Activated CD4-positive, alpha-beta memory T cell treated with anti-CD3 and anti-CD28 coated beads for 36 hours (primary cell): ENCODE measurements at regions of chr21 and their contacts with region 1.

Region 1: DNA sequence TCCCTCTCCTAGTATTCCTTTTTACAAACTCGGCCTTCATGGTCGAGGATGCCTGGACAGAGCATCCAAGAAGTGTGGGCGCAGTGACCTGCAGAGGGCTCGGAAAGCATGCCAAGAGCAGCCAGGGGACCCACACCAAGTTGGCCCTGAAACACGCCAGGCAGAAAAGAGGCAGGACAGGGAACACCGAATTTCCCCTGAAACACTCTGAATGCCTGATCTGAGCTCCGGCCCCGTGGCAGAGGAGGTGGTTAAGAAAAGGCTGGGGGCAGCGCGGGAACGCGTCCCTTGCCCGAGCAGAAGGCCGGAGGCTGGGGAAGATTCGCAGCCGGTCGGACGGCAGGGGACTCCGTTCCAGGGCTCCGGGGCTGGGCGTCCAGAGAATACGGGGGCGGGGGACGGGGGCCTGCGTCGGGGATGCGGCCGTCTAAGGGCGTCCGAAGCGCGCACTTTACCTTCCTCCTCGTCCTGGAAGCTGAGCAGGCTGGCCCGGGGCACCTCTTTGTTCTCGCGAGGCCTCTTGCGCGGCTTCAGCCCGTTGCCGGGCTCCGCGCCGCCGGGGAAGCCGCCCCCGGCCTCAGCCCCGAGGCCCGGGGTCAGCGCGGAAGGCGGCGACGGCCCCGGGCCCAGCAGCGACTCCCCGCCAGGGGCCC is 558 bp downstream of the PAXBP1 start:
- DNase-seq: peak; percentile 69
- H3K4me3 Mint-ChIP-seq: peak overlapping the region; percentile 98
- H3K27ac Mint-ChIP-seq: peak overlapping the region; percentile 93
- H3K4me1 Mint-ChIP-seq: peaks cover 61% of the 10 kb centered on the region
- H3K27me3 Mint-ChIP-seq: peaks cover 3% of the 10 kb centered on the region

Region 2: GRCh38 chr21:32507342-32507919 is 263.6 kb before region 1 on chr21:
- CTCF ChIA-PET with region 1: no interaction called
- POLR2A ChIA-PET with region 1: no interaction called
- intact Hi-C with region 1: no loop called
- DNase-seq: no peak
- H3K4me3 Mint-ChIP-seq: no peak overlapping the region
- H3K27ac Mint-ChIP-seq: no peak overlapping the region
- H3K4me1 Mint-ChIP-seq: no peaks in the 10 kb centered on the region
- H3K27me3 Mint-ChIP-seq: no peaks in the 10 kb centered on the region

Region 3: DNA sequence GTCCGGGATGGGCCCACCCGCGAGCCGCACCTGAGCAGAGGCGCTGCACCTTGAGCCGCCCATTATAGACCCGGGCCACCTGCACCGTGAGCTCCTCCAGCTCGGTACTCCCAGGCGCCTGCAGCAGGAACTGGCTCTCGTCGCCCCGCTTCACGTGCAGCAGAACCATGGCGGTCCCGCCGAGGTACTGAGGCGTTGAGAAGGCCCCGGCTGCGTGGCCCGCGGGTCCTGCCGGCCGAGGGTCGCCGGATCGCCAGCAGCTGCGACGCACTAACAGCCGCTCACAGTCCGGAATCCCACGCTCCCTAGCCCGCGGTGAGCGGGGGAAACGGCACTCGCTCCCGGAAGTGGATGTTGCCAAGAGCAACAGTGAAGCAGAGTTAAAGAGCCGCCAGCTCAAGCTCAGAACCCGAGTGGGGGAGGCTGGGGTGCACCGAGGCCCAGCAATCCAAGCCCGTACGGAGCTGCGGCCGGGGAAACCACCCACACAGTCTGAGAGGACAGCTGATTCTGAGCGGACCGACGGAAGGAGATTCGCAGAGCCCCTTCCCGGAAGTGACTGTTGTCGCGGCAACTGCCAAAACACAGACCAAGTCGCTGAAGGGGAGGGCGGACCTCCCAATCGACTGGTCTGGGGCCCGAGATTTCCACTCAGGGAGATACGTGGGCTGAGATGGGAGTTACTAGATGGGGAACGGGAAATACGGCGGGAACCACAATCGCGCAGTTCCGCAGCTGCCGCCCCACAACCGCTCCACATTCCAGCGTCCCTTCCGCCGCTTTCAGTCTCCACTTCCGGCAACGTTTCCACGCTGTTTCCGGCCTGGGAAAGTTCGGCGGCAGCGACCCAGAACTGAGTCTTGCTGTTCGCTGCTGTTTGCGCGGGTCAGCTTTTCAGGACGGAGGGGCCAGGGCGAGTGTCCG is 158.7 kb before region 1 on chr21 and contains the start of gene CFAP298:
- CTCF ChIA-PET with region 1: interaction called, 3 read pairs
- POLR2A ChIA-PET with region 1: interaction called, 8 read pairs
- intact Hi-C with region 1: loop called (anchors 1 kb)
- DNase-seq: peak; percentile 93
- H3K4me3 Mint-ChIP-seq: peak within 1 kb of the TSS; percentile 86
- H3K27ac Mint-ChIP-seq: peak within 1 kb of the TSS; percentile 79
- H3K4me1 Mint-ChIP-seq: peaks cover 10% of the 10 kb centered on the region
- H3K27me3 Mint-ChIP-seq: no peaks in the 10 kb centered on the region
- total RNA-seq, gene CFAP298: 39.4 to 41.8 TPM

Region 4: GRCh38 chr21:32807717-32808380 is 36.9 kb after region 1 on chr21:
- CTCF ChIA-PET with region 1: no interaction called
- POLR2A ChIA-PET with region 1: no interaction called
- intact Hi-C with region 1: loop called (anchors 2 kb)
- DNase-seq: no peak
- H3K4me3 Mint-ChIP-seq: no peak overlapping the region
- H3K27ac Mint-ChIP-seq: no peak overlapping the region
- H3K4me1 Mint-ChIP-seq: peaks cover 20% of the 10 kb centered on the region
- H3K27me3 Mint-ChIP-seq: no peaks in the 10 kb centered on the region

Region 5: DNA sequence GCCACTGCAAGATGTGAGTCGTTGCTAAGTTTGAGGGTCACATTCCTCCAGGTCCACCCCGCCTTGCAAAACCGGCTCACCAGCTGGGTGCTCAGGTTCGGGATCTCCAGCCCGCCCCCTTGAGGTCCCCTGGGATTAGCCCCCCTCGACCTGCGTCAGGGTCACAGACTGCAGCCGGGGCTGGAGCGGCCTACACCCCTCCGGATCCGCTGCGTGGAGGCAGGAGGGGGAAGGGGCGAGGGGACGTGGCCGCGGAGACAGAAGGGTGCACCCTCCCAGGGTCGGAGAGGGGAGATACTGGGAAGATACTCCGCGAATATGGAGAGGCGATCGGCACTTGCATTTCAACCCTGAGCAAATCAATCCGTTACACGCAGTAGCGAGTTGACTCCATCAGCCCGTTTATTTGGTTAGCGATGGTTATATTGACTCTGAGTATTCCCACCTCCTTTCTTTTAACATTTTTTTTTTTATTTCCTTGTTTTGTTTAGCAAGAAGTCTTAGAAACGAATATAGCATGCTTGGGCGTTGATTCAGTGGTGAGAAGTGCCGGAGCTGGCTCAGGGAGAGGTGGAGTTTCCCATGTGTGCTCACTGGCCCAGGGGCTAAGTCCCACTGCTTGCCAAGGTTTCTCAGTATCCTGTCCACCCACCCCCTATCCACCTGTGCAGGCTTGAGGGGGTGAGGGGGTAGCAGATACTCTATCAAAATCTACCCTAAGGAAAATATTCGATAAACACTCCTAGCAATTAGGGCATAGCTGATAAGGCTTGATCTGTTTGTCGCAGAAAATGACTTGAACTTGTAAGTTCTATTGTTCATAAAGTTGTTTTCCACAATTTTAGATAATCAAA is 459.8 kb after region 1 on chr21:
- CTCF ChIA-PET with region 1: no interaction called
- POLR2A ChIA-PET with region 1: no interaction called
- intact Hi-C with region 1: loop called (anchors 1 kb)
- DNase-seq: peak; percentile 48
- H3K4me3 Mint-ChIP-seq: peak overlapping the region; percentile 90
- H3K27ac Mint-ChIP-seq: peak overlapping the region; percentile 91
- H3K4me1 Mint-ChIP-seq: peaks cover 54% of the 10 kb centered on the region
- H3K27me3 Mint-ChIP-seq: no peaks in the 10 kb centered on the region

Region 6: DNA sequence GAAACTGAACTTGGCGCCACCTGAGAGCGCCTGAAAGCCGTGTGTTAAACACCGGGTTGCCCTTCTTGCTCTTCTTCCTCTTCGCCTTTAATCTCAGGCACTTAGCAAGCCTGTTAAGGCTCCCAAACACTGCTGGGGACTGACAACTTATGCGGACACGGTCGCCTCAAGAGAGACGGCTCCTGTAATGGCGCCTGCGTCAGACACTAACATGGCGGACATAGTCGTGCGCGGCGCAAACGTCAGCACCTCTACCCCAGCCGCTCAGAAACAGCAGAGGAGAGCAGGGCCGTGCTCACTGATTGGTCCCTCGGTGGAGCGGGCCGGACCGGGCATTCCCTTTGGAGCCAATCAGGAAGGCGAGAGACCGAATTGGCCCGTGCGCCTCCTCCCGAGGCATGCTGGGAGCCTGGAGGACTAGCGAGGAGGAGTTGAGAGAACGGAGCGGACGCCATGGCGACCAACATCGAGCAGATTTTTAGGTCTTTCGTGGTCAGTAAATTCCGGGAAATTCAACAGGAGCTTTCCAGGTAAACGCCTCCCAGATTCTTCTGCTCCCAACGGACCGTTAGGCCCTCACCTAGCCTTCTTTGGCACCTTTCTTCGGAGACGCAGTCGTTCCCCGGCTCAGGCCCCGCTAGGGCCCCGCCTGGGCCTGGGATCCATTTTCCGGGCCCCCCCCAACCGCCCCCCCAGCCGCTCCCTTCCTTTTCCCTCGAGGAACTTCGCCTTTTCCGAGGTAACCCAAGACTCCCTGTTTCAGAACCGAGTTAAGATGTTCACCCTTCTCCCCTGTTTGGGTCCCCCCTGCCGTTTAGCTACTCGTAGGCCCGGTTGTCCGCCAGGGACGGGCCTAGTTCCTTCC is 771.9 kb after region 1 on chr21 and contains the start of gene SON:
- CTCF ChIA-PET with region 1: no interaction called
- POLR2A ChIA-PET with region 1: no interaction called
- intact Hi-C with region 1: loop called (anchors 1 kb)
- DNase-seq: peak; percentile 99
- H3K4me3 Mint-ChIP-seq: peak within 1 kb of the TSS; percentile 96
- H3K27ac Mint-ChIP-seq: peak within 1 kb of the TSS; percentile 100
- H3K4me1 Mint-ChIP-seq: peaks cover 26% of the 10 kb centered on the region
- H3K27me3 Mint-ChIP-seq: no peaks in the 10 kb centered on the region
- total RNA-seq, gene SON: 270 to 279 TPM